ENCODE measurements at regions of chr12 and their contacts with region 1.

Region 1: GRCh38 chr12:123101467-123102004 is 49.4 kb downstream of the PITPNM2 start:
- DNase-seq: no peak
- H3K4me3 ChIP-seq: no peak overlapping the region
- H3K27ac ChIP-seq: no peak overlapping the region
- H3K4me1 ChIP-seq: peaks cover 36% of the 10 kb centered on the region
- H3K27me3 ChIP-seq: no peaks in the 10 kb centered on the region
- CTCF ChIP-seq: no peak

Region 2: DNA sequence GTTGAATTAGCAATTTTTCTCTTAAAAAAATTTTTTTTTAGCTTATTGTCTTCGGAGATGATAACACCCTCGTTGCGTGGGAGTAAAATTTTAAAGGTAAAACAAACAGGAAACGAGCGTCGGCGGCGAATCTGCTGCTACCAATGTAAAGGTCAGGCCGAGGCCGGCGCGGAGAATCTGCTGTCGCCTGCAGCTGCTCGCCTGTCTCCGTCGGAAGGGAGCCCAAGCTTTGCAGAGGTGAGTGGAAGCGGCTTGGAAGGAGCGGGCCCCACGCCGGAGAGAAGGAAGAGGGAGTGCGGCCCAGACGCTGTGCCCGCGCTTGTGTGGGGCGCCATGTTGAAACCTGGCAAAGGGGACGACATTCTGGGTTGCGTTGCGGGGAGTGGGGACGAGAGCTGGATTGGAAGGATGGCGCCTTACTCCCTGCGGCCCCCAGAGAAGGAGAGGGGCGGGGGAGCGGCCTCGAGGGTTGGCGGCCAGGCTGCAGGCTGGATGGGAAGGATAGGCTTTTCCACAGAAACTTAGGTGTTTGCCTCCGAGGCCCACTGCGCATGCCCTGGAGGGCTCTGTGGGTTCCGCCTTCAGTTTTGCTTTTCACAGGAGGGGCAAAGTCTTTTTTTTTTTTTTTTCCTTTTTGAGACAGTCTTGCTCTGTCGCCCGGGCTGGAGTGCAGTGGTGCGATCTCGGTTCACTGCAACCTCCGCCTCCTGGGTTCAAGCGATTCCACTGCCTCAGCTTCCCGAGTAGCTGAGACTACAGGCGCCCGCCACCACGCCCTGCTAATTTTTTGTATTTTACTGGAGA is 356.6 kb after region 1 on chr12 and contains the start of gene SNRNP35:
- CTCF ChIA-PET with region 1: interaction called, 12 read pairs
- POLR2A ChIA-PET with region 1: no interaction called
- intact Hi-C with region 1: no loop called
- DNase-seq: peak; percentile 56 to 78
- H3K4me3 ChIP-seq: peak within 1 kb of the TSS; percentile 89
- H3K27ac ChIP-seq: peak within 1 kb of the TSS; percentile 99
- H3K4me1 ChIP-seq: 0 out of 2 replicates have a peak, but pooled peaks cover 6% of the 10 kb centered on the region
- H3K27me3 ChIP-seq: no peaks in the 10 kb centered on the region
- CTCF ChIP-seq: no peak
- total RNA-seq, gene SNRNP35: 24.3 and 28.6 TPM in 2 replicates

Region 3: DNA sequence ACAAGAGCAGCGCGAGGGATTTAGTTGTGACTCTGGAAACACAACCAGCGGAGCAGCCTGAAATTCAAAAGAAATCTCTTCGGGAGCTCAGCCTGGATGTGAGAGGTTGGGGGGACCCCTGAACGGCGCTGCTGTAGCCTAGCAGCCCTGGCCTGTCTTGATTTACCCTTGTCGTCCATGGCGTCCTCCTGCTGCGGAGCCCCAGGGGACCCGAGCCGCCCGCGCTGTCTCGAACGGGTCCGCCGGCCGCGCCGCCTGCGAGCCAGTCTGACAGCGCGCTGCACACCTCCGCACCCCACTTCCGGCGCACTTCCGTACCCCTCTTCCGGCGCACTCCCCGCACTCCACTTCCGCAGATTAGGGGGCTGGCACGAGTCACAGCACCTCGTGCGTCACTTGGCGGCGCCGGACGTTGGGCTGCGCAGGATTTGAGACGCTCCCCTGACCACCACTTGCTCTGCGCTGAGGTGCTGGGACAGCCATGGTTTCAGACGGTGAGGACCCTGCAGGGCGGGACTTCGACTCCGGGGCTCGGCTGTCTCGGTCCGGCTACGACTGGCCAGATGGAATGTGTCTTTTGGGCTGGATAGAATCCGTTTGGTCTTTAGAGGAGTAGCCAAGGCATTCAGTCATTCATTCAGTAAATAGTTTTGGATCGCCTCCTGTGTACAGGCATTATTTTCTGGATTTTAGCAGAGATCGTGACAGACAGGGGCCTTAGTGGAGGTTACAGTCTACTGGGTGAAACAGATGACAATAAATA is 532.0 kb after region 1 on chr12 and contains the starts of genes EIF2B1 and GTF2H3:
- CTCF ChIA-PET with region 1: no interaction called
- POLR2A ChIA-PET with region 1: no interaction called
- intact Hi-C with region 1: no loop called
- DNase-seq: peak; percentile 91
- H3K4me3 ChIP-seq: peak within 1 kb of the TSS; percentile 98
- H3K27ac ChIP-seq: peak within 1 kb of the TSS; percentile 61
- H3K4me1 ChIP-seq: peaks cover 9% of the 10 kb centered on the region; the same call in 1 of the 2 replicates
- H3K27me3 ChIP-seq: no peaks in the 10 kb centered on the region
- CTCF ChIP-seq: no peak
- total RNA-seq, gene EIF2B1: 43.8 and 47.3 TPM in 2 replicates
- total RNA-seq, gene GTF2H3: 30.3 and 42.9 TPM in 2 replicates

Measured in PC-9 (cell line).